ENCODE measurements at regions of chr2 and their contacts with region 1.

Region 1: DNA sequence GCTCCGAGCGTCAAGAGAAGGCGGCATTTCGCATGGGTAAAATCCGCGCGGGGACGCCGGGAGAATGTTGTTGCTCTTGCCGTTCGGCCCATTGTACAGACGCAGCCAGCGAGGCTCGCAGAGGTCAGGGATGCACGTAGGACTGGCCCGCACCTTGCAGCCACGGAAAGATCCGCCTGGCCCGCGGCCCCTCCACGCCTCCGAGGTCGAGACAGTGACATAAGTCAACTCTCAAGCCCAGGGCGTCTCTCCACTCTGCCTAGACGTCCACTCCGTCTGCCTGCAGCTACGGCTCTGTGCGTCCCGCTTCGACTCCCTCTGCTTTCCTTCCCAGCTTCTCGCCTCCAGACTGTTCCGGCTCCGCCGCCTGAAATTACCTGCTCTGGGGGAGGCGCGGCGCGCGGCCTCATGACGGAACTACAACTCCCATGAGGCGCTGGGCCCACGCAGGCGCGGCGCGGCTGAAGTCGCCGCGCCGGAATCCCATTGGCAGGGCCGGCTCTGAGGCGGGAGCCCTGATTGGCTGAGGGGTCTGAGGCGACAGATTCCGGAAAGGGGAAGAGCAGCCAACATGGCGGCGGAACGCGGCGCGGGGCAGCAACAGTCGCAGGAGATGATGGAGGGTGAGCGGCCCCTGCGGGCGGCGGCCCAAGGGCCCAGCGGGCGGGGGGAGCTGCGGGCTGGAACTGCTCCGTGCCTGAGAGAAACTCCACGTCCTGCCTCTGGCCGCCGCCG is at the start of gene PPP1R7:
- DNase-seq: peak; percentile 95 to 97
- ATAC-seq: peak; percentile 95 to 97 (median 96)
- H3K4me3 ChIP-seq: peak within 1 kb of the TSS; percentile 96
- H3K27ac ChIP-seq: peak within 1 kb of the TSS; percentile 89
- H3K4me1 ChIP-seq: peaks cover 14% of the 10 kb centered on the region
- H3K27me3 ChIP-seq: peaks cover 0 to 4% (median 0%) of the 10 kb centered on the region in 3 donors
- CTCF ChIP-seq: no peak
- total RNA-seq, gene PPP1R7: 71.3 to 80.8 (median 72.2) TPM

Region 2: DNA sequence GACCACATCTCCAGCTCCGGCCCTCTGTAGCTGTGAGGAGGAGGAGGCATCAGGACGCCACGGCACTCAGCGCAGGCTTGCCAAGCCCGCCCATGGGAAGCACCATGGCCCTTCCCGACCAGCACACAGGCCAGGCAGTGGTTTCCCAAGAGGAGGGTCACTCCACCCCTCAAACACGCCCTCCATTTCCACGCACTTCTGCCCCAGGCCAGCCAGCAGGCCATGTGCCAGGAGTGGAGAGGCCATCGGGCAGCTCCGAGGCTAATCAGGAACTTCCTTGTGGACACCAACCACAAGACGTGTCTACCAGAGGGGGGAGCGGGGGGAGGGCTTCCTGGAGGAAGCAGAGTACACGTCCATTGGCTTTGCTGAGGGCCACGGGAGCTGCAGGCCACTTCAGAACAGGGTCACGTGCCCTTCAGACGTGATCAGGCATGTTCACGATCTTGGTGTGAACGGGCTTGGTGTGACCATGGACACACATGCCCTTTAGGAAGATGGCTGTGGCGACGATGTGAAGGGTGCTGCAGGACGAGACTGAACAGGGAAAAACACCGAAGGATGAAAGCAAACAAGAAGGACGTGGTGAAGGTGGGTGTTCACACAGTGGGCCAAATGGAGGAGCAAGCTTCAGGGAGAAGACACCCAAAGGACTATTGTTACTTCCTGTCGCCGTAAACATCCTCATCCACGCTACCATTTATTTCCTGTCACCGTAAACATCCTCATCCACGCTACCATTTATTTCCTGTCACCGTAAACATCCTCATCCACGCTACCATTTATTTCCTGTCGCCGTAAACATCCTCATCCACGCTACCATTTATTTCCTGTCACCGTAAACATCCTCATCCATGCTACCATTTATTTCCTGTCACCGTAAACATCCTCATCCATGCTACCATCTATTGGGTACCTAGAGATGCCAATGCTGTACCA is 41.6 kb before region 1 on chr2:
- intact Hi-C with region 1: loop called (anchors 5 kb)
- DNase-seq: no peak
- ATAC-seq: no peak
- H3K4me3 ChIP-seq: no peak overlapping the region
- H3K27ac ChIP-seq: no peak overlapping the region
- H3K4me1 ChIP-seq: no peaks in the 10 kb centered on the region
- H3K27me3 ChIP-seq: no peaks in the 10 kb centered on the region
- CTCF ChIP-seq: no peak